ENCODE measurements at regions of chr17 and their contacts with region 1.

Region 1: GRCh38 chr17:6473128-6473767 is 29.0 kb downstream of the PIMREG start:
- DNase-seq: peak; percentile 56
- H3K4me3 ChIP-seq: no peak overlapping the region
- H3K27ac ChIP-seq: no peak overlapping the region
- H3K4me1 ChIP-seq: peaks cover 38% of the 10 kb centered on the region
- H3K27me3 ChIP-seq: no peaks in the 10 kb centered on the region
- CTCF ChIP-seq: peak; percentile 96 to 98

Region 2: GRCh38 chr17:6523330-6523729 is 50.1 kb after region 1 on chr17:
- CTCF ChIA-PET with region 1: no interaction called
- dilution Hi-C with region 1: no loop called
- in situ Hi-C with region 1: no loop called
- intact Hi-C with region 1: no loop called
- DNase-seq: peak; percentile 48
- H3K4me3 ChIP-seq: no peak overlapping the region
- H3K27ac ChIP-seq: no peak overlapping the region
- H3K4me1 ChIP-seq: peaks cover 18% of the 10 kb centered on the region
- H3K27me3 ChIP-seq: no peaks in the 10 kb centered on the region
- CTCF ChIP-seq: no peak

Region 3: DNA sequence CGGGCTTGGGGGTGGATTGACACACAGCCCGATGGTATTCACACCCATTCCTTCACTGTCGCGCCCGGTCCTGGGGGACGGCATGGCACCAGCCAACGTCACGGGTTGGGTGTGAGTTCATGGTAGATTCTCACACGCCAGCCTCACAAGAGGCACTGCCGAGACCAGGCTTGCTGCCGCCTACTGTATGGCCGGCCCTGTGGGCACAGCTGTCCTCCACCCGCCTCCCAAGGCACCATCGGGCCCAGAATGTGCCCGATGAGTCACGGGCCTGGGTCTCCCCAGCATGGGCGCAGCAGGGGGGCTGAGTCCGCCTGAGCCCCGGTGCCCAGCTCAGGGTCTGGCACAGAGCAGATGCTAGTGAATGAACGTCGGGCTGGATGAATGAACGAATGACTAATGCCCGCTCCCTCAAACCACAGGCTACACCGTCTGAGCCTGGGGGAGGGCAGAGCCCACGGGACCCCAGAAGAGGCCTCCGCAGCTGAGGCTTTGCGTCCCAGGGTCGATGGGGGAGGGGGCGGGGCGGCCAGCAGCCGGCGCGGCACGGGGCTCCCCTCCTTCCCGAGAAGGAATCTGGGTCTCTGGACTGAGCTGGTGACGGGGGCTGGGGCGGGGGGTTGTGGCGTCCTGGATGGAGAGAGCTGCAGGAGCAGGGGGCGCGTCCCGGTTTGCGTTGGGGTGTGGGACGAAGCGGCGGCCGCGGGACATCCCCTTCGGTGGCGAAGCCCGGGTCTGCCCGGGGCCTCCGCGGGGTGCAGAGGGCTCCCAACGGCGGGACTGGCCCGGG is 82.3 kb after region 1 on chr17:
- CTCF ChIA-PET with region 1: no interaction called
- dilution Hi-C with region 1: loop called (anchors 5 kb)
- in situ Hi-C with region 1: loop called in 1 of 2 experiments (anchors 10 kb)
- intact Hi-C with region 1: loop called (anchors 2 kb)
- DNase-seq: peak; percentile 76
- H3K4me3 ChIP-seq: peak overlapping the region; percentile 65 to 75 (median 67)
- H3K27ac ChIP-seq: peak overlapping the region; percentile 42
- H3K4me1 ChIP-seq: peaks cover 36% of the 10 kb centered on the region
- H3K27me3 ChIP-seq: no peaks in the 10 kb centered on the region
- CTCF ChIP-seq: peak in 1 of 2 donors; percentile 11

Region 4: DNA sequence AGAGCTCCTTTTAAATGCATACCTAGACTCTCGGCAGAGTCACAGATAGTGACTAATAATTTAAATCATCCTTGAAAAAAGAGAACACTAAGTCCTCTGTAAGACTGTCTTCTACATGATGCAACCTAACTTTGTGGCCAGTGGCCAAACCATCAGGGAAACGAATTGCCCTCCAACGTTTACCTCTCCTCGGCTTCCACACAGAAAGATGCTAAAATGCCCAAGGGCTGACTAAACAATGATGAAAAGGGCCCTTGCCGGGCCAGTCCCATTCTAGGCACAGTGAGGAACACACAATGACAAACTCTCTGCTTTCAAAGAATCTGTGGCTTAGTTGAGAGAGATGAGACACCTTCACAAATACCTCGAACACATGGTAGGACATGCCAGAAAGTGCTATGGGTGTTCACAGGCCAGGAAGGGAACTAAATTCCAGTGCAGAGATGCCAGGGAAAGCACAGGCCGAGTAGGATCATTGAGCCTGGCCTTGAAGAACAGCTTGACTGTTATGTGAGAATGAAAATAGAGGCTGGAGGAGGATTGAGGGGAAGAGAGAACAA is 118.4 kb after region 1 on chr17:
- CTCF ChIA-PET with region 1: no interaction called
- dilution Hi-C with region 1: no loop called
- in situ Hi-C with region 1: loop called in 1 of 2 experiments (anchors 25 kb)
- intact Hi-C with region 1: loop called (anchors 1 kb)
- DNase-seq: peak; percentile 98
- H3K4me3 ChIP-seq: no peak overlapping the region
- H3K27ac ChIP-seq: peak overlapping the region; percentile 71
- H3K4me1 ChIP-seq: peaks cover 23% of the 10 kb centered on the region
- H3K27me3 ChIP-seq: no peaks in the 10 kb centered on the region
- CTCF ChIP-seq: no peak

Region 5: GRCh38 chr17:6640536-6641373 is 167.5 kb after region 1 on chr17 and contains the starts of genes KIAA0753 and TXNDC17:
- CTCF ChIA-PET with region 1: no interaction called
- dilution Hi-C with region 1: no loop called
- in situ Hi-C with region 1: loop called (anchors 10 kb)
- intact Hi-C with region 1: loop called (anchors 1 kb)
- DNase-seq: peak; percentile 89
- H3K4me3 ChIP-seq: peak within 1 kb of the TSS; percentile 66 to 97 (median 79)
- H3K27ac ChIP-seq: peak within 1 kb of the TSS; percentile 87
- H3K4me1 ChIP-seq: peaks cover 43% of the 10 kb centered on the region
- H3K27me3 ChIP-seq: no peaks in the 10 kb centered on the region
- CTCF ChIP-seq: no peak
- total RNA-seq, gene KIAA0753: 23.2 to 25.2 TPM
- total RNA-seq, gene TXNDC17: 315 to 319 TPM

Region 6: DNA sequence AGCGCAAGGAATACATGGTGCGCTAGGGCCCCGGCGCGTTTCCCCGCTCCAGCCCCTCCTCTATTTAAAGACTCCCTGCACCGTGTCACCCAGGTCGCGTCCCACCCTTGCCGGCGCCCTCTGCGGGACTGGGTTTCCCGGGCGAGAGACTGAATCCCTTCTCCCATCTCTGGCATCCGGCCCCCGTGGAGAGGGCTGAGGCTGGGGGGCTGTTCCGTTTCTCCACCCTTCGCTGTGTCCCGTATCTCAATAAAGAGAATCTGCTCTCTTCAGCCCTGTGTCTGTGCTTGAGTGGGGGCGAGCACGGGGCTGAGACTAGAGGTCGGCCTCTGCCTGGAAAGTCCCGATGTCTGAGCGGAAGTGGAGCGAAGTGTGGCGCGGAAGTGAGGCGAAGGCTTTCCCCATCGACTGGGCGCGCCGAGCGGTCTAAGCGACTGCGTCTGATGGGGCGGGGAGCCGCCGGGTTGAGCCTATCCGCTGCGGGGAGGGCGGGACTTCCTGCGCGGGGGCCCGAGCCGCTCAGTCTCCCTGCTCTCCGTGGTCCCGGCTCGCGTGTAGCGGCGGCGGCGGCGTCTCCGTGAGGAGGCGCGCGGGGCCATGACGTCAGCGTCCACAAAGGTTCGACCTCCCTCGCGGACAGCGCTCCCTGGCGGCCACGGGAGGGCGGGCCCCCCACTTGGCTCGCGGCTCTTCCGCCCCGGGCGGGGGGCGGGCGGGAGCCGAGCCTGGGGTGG is 541.2 kb after region 1 on chr17:
- CTCF ChIA-PET with region 1: no interaction called
- dilution Hi-C with region 1: no loop called
- in situ Hi-C with region 1: loop called (anchors 25 kb)
- intact Hi-C with region 1: loop called (anchors 10 kb)
- DNase-seq: peak; percentile 97
- H3K4me3 ChIP-seq: peak overlapping the region; percentile 80 to 95 (median 81)
- H3K27ac ChIP-seq: peak overlapping the region; percentile 93
- H3K4me1 ChIP-seq: peaks cover 24% of the 10 kb centered on the region
- H3K27me3 ChIP-seq: no peaks in the 10 kb centered on the region
- CTCF ChIP-seq: peak; percentile 29 to 60